GM18951 (cell line): ENCODE measurements at regions of chr5 and their contacts with region 1.

Region 1: GRCh38 chr5:151659001-151659754 is 27.5 kb downstream of the SPARC start:
- POLR2A ChIP-seq: no peak

Region 2: GRCh38 chr5:150904479-150905318 is 754.5 kb before region 1 on chr5 and contains the start of gene ZNF300:
- in situ Hi-C with region 1: no loop called
- POLR2A ChIP-seq: no peak

Region 3: GRCh38 chr5:151447174-151448037 is 211.8 kb before region 1 on chr5 and contains the start of gene SLC36A1:
- in situ Hi-C with region 1: loop called (anchors 10 kb)
- POLR2A ChIP-seq: peak; percentile 81

Region 4: GRCh38 chr5:151523335-151523734 is 135.8 kb before region 1 on chr5:
- in situ Hi-C with region 1: loop called (anchors 10 kb)
- POLR2A ChIP-seq: no peak

Region 5: DNA sequence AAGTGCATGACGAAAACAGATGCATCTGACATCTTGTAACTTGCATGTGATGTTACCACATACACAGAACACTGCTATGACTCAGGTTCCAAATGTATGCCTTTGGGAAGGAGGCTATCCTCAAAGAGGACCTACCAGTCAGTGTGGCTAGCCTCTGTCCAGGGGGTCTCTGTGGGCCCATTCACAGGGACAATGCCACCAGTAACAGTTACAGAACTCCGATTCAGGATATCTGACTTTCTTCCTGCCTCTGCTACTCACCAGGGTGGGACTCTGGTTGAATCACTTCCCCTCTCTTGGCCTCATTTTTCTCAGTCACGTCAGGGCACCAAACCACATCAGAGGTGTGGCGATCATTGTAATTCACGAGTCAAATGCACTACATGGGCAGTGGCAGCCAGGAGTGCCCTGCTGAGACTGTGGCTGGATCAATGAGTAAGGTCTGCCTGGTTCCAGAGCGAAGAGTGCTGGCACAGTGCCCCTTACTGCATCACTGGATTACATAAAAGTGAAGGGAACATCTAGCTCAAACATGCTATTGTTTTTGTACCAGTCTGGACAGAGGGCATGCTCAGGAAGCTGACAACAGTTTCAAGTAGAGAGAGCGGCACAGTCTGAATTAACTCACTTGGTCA is 86.0 kb after region 1 on chr5:
- in situ Hi-C with region 1: loop called (anchors 5 kb)
- POLR2A ChIP-seq: no peak